Posterior cingulate gyrus (tissue), 11 donors: ENCODE measurements at regions of chr4 and their contacts with region 1.

Region 1: DNA sequence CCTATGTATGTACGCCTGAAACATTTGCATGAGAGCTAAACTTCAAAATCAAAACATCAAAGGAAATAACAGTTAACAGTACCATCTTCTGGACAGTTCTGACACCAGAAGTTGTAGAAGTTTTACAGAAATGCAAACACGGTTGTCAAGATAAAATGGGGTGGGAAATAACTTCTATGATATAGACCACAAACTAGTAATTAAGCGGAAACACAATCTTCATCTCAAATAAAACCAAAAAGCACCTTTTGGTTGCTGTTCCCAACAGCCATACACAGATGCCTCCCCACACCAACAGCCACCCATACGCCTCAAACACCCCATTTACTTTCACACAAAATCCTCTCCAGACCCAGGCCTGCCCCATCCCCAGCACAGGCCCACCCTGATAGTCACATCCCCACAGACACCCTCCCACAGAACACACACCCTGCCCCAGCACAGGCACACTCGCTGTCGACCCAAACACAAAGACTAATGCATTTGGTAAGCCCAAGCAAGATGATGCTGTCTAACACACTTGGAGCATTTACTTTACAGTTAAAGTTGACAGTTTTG is 64.3 kb downstream of the TAPT1 start:
- DNase-seq: no peak

Region 2: GRCh38 chr4:15778289-15779241 is 383.4 kb before region 1 on chr4 and contains the start of gene CD38:
- intact Hi-C with region 1: no loop called
- DNase-seq: peak in 9 of 10 donors; percentile 10 to 88 (median 55)

Region 3: GRCh38 chr4:16079046-16079445 is 82.9 kb before region 1 on chr4:
- intact Hi-C with region 1: loop called (anchors 10 kb)
- DNase-seq: no peak

Region 4: DNA sequence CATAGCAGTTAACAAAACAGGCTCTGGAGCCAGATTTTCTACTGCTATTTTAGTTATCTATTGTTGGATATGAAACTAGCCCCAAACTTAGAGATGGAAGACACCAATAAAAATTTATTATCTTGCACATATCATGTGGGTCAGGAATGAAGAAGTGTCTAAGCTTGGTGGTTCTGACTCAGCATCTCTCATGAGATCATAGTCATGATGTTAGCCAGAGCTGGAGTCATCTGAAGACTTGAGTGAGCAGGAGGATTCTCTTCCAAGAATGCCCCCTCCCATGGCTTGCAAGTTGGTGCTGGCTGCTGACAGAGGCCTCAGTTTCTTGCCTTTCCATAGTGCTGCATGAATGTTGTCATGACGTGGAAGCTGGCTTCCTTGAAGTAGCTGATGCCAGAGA is 132.5 kb after region 1 on chr4:
- intact Hi-C with region 1: no loop called
- DNase-seq: no peak